Breast epithelium (tissue), 4 donors: ENCODE measurements at regions of chr2 and their contacts with region 1.

Region 1: GRCh38 chr2:211599146-211599545 is 939.5 kb downstream of the ERBB4 start:
- DNase-seq: no peak
- H3K4me3 ChIP-seq: no peak overlapping the region
- H3K27ac ChIP-seq: no peak overlapping the region
- H3K4me1 ChIP-seq: no peaks in the 10 kb centered on the region
- H3K27me3 ChIP-seq: no peaks in the 10 kb centered on the region
- CTCF ChIP-seq: no peak
- POLR2A ChIP-seq: no peak

Region 2: DNA sequence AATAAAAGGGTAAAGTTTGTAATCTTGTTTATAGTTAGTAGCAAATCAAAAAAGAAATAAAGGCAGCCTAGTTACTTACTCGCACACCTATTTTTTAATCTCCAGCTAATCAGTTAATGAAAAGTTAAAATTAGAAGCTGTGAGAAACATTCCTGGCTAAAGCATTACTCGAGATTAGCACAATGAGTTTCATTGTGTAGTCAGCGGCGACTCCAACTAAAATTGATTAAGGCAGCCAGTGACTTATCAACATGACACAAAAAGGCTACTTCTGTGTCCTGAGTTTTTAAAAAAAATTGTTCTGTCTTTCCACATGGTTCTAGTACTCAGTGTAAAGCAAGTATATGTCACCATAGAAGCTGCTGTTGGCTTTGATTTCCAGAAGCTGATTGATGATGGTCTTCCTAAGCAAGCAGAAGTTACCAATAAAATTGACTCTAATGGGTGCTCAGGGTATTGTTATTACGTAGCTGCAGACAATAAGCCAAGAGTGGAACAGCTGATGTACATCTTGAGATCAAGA is 883.5 kb before region 1 on chr2:
- intact Hi-C with region 1: loop called (anchors 5 kb)
- DNase-seq: no peak
- H3K4me3 ChIP-seq: no peak overlapping the region
- H3K27ac ChIP-seq: no peak overlapping the region
- H3K4me1 ChIP-seq: no peaks in the 10 kb centered on the region
- H3K27me3 ChIP-seq: no peaks in the 10 kb centered on the region
- CTCF ChIP-seq: no peak
- POLR2A ChIP-seq: no peak

Region 3: GRCh38 chr2:211035548-211036185 is 563.5 kb before region 1 on chr2:
- intact Hi-C with region 1: no loop called
- DNase-seq: no peak
- H3K4me3 ChIP-seq: no peak overlapping the region
- H3K27ac ChIP-seq: no peak overlapping the region
- H3K4me1 ChIP-seq: no peaks in the 10 kb centered on the region
- H3K27me3 ChIP-seq: no peaks in the 10 kb centered on the region
- CTCF ChIP-seq: peak in 1 of 3 donors; percentile 32
- POLR2A ChIP-seq: no peak

Region 4: GRCh38 chr2:211408516-211408915 is 190.6 kb before region 1 on chr2:
- intact Hi-C with region 1: no loop called
- DNase-seq: no peak
- H3K4me3 ChIP-seq: no peak overlapping the region
- H3K27ac ChIP-seq: no peak overlapping the region
- H3K4me1 ChIP-seq: no peaks in the 10 kb centered on the region
- H3K27me3 ChIP-seq: no peaks in the 10 kb centered on the region
- CTCF ChIP-seq: no peak
- POLR2A ChIP-seq: no peak